Aorta (tissue), 5 donors: ENCODE measurements at regions of chrX and their contacts with region 1.

Region 1: GRCh38 chrX:150352581-150352980 is 10.5 kb upstream of the MAMLD1 start:
- DNase-seq: no peak
- ATAC-seq: no peak
- H3K4me3 ChIP-seq: no peak overlapping the region
- H3K27ac ChIP-seq: no peak overlapping the region
- H3K4me1 ChIP-seq: no peaks in the 10 kb centered on the region
- H3K27me3 ChIP-seq: no peaks in the 10 kb centered on the region

Region 2: DNA sequence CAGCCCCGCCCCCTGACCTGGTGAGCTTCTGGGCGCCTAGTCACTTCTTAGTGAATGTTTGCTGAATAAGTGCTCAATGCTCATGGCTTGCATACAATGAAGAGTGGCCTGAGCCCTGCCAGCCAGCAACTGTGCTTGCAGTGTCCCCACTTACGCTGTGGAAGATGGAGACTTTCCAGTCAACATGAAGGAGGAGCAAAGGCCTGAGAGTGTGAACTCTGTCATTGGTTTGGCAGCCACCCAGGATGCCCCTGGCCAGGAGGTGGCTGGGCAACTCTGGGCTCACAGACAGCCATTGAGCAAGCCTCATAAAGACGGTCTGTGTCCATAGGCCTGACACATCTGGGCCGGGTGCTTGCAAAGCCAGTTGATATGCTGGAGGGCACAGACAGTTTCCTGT is 61.6 kb before region 1 on chrX:
- intact Hi-C with region 1: loop called in 1 of 2 experiments (anchors 10 kb)
- DNase-seq: no peak
- ATAC-seq: peak; percentile 29
- H3K4me3 ChIP-seq: no peak overlapping the region
- H3K27ac ChIP-seq: no peak overlapping the region
- H3K4me1 ChIP-seq: no peaks in the 10 kb centered on the region
- H3K27me3 ChIP-seq: no peaks in the 10 kb centered on the region

Region 3: GRCh38 chrX:150752124-150752523 is 399.5 kb after region 1 on chrX:
- intact Hi-C with region 1: no loop called
- DNase-seq: no peak
- ATAC-seq: no peak
- H3K4me3 ChIP-seq: no peak overlapping the region
- H3K27ac ChIP-seq: no peak overlapping the region
- H3K4me1 ChIP-seq: no peaks in the 10 kb centered on the region
- H3K27me3 ChIP-seq: no peaks in the 10 kb centered on the region